ENCODE measurements at regions of chr7 and their contacts with region 1.

Region 1: GRCh38 chr7:86574006-86574405 is 69.7 kb upstream of the GRM3 start:
- DNase-seq: no peak
- H3K4me3 ChIP-seq: no peak overlapping the region
- H3K27ac ChIP-seq: no peak overlapping the region
- H3K4me1 ChIP-seq: no peaks in the 10 kb centered on the region
- H3K27me3 ChIP-seq: no peaks in the 10 kb centered on the region
- CTCF ChIP-seq: no peak
- POLR2A ChIP-seq: no peak

Region 2: DNA sequence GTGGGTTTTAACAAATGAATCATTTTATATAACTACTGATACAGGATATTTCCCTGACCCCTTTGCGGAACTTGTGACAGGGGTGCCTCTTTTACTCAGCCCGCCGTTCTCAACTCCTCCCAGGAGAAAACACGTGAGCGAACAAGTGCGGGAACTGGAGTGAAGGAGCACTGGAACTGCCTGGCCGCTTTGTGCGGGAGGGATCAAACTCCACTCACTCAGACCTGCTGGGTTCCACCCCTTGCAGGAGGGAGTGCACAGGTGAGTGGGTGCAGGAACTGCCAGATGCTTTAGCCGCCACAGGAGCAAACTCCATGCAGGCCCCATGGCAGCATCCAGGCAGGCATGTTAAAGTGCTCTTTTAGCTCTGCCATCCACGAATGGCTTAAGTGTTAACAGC is 443.7 kb before region 1 on chr7:
- intact Hi-C with region 1: no loop called
- DNase-seq: peak; percentile 63
- H3K4me3 ChIP-seq: no peak overlapping the region
- H3K27ac ChIP-seq: no peak overlapping the region
- H3K4me1 ChIP-seq: no peaks in the 10 kb centered on the region
- H3K27me3 ChIP-seq: no peaks in the 10 kb centered on the region
- CTCF ChIP-seq: no peak
- POLR2A ChIP-seq: no peak

Region 3: DNA sequence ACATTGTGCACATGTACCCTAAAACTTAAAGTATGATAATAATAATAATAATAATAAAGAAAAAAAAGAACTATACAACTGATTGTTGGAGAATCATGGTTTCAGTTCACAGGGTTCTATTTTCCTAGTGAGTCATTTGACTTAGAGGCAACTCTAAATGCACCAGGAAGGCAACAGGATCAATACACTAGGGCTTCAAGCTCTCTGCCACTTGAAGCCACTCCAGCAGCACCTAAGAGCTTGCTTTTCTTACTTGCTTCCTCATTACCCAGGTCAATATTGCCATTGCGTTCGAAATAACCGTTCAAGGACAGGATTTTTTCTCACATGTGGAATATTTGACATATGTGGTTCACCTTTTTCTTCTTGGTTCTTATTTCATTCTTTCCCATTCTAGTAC is 259.4 kb after region 1 on chr7:
- intact Hi-C with region 1: loop called (anchors 10 kb)
- DNase-seq: no peak
- H3K4me3 ChIP-seq: no peak overlapping the region
- H3K27ac ChIP-seq: no peak overlapping the region
- H3K4me1 ChIP-seq: no peaks in the 10 kb centered on the region
- H3K27me3 ChIP-seq: no peaks in the 10 kb centered on the region
- CTCF ChIP-seq: no peak
- POLR2A ChIP-seq: no peak

Region 4: DNA sequence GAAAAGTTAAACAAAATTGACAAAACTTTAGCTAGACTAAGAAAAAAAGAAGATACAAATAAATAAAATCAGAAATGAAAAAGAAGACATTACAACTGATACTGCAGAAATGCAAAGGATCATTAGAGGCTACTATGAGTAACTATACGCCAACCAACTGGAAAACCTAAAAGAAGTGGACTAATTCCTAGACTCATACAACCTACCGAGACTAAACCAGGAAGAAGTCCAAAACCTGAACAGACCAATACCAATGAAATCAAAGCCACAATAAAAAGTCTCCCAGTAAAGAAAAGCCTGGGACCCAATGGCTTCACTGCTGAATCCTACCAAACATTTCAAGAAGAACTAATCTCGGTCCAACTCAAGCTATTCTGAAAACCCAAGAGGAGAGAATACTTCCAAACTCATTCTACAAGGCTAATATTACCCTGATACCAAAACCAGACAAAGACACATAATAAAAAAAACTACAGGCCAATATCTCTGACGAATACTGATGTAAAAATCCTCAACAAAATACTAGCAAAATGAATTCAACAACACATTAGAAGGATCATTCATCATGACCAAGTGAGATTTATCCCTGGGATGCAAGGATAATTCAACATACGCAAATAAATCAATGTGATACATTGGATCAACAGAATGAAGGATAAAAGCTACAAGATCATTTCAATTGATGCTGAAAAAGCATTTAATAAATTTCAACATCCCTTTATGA is 465.1 kb after region 1 on chr7:
- intact Hi-C with region 1: no loop called
- DNase-seq: no peak
- H3K4me3 ChIP-seq: peak overlapping the region in 5 of 8 donors; percentile 12 to 46 (median 32)
- H3K27ac ChIP-seq: peak overlapping the region in 6 of 8 donors; percentile 9 to 61 (median 52)
- H3K4me1 ChIP-seq: no peaks in the 10 kb centered on the region
- H3K27me3 ChIP-seq: no peaks in the 10 kb centered on the region
- CTCF ChIP-seq: no peak
- POLR2A ChIP-seq: no peak